Activated CD4-positive, alpha-beta T cell treated with anti-CD3 and anti-CD28 coated beads for 36 hours (primary cell): ENCODE measurements at regions of chr3 and their contacts with region 1.

Region 1: DNA sequence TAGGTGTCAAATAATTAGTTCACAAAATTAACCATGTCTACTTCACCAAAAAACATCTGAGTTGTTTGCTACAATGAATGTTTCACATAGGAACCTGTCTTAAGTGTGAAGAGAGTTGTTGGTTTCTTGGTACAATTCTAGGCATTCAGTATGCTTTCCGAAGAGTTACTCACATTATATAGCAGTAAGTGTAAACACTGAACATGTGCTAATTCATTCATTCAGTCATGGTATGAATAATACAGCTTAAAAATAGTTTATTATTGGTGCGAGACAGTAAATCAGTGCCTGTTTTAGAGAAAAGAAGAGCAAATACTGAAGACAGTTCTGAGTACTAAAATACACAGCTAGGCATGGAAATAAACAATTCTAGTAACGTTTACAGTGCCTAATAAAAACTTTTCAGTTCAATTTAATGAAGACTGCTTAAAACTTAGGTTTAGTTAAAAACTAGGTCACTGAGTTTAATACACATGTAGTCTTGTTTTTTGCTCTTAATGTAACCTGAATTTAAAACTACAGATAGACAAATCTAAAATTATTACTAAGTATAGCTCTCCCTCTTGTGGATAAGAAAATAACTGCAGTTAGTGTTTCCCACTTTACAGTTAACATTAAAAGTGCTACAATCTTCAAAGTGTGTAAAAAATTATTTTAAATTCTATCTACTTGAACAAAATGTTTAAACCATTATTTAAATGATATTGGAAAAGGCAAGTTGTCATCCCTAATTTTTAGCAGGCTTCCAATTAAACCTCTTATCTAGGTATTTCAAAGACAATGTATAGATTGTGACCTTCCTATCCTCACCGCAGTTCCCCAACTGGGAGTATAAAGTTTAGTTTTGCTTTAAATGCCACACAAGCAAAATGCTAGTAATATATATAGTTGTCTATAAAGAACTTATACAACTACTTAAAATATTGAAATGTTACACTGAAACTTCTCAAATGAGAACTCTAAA is 20.1 kb upstream of the ZCWPW2 start:
- DNase-seq: no peak
- ATAC-seq: no peak
- H3K4me3 Mint-ChIP-seq: no peak overlapping the region
- H3K27ac Mint-ChIP-seq: no peak overlapping the region
- H3K4me1 Mint-ChIP-seq: peaks cover 14% of the 10 kb centered on the region
- H3K27me3 Mint-ChIP-seq: no peaks in the 10 kb centered on the region

Region 2: DNA sequence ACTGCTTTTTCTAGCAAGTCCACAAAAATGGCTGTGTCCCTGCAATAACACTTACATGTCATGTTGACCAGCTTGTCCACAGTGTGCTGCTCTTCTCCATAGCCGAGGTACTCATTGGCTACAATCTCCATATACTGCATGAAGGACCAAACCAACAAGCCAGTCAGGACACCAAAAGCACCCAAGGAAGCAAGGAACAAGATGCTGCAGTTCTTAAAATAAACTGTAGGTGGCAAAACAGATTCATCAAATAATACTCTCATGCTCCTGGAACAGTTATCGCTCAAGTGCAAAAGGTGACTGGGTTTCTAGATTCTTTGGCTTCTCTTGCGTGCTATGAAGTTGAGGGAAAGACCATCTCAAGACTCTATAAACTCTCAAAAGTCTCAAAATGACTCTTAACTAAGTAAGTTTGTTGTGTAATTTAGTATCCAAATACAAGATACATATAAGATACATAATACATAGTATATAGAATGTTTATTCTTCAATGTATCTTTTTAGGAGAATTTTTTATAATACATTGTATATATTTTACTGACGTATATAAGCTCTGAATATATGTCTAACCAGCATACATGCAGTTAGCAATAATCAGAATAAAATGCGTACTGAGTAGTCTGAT is 1016.3 kb before region 1 on chr3:
- CTCF ChIA-PET with region 1: no interaction called
- POLR2A ChIA-PET with region 1: no interaction called
- intact Hi-C with region 1: loop called in 1 of 2 experiments (anchors 5 kb)
- DNase-seq: no peak
- ATAC-seq: peak; percentile 63
- H3K4me3 Mint-ChIP-seq: no peak overlapping the region
- H3K27ac Mint-ChIP-seq: no peak overlapping the region
- H3K4me1 Mint-ChIP-seq: no peaks in the 10 kb centered on the region
- H3K27me3 Mint-ChIP-seq: peaks cover 2% of the 10 kb centered on the region

Region 3: GRCh38 chr3:28050895-28051294 is 277.6 kb before region 1 on chr3:
- CTCF ChIA-PET with region 1: no interaction called
- POLR2A ChIA-PET with region 1: no interaction called
- intact Hi-C with region 1: loop called (anchors 2 kb)
- DNase-seq: peak; percentile 64
- ATAC-seq: peak; percentile 80
- H3K4me3 Mint-ChIP-seq: no peak overlapping the region
- H3K27ac Mint-ChIP-seq: peak overlapping the region; percentile 4
- H3K4me1 Mint-ChIP-seq: peaks cover 32% of the 10 kb centered on the region
- H3K27me3 Mint-ChIP-seq: peaks cover 6% of the 10 kb centered on the region

Region 4: GRCh38 chr3:28317438-28318022 is 10.9 kb before region 1 on chr3:
- CTCF ChIA-PET with region 1: interaction called, 25 read pairs
- POLR2A ChIA-PET with region 1: no interaction called
- intact Hi-C with region 1: loop called in 1 of 2 experiments (anchors 1 kb)
- DNase-seq: peak; percentile 36
- ATAC-seq: peak; percentile 93
- H3K4me3 Mint-ChIP-seq: no peak overlapping the region
- H3K27ac Mint-ChIP-seq: no peak overlapping the region
- H3K4me1 Mint-ChIP-seq: peaks cover 4% of the 10 kb centered on the region
- H3K27me3 Mint-ChIP-seq: no peaks in the 10 kb centered on the region

Region 5: DNA sequence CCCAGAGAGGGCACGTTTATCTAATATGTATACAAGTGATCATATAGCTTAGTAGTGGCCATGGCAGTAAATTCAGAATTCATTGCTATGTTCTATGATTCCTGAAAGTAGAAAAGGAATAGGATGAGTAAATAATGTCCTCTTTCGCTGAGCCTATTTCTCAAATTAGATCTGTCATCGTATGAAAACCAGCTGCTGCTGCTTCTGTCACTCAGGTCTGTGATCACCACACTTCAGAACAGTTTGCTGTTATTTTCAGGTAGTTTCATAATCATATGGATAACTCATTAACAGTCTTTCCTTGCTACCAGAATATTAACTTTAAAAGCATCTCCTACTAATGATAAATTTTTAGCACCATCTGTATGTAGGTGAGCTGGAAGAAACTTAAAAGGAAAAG is 309.3 kb after region 1 on chr3:
- CTCF ChIA-PET with region 1: no interaction called
- POLR2A ChIA-PET with region 1: no interaction called
- intact Hi-C with region 1: no loop called
- DNase-seq: no peak
- ATAC-seq: no peak
- H3K4me3 Mint-ChIP-seq: no peak overlapping the region
- H3K27ac Mint-ChIP-seq: no peak overlapping the region
- H3K4me1 Mint-ChIP-seq: no peaks in the 10 kb centered on the region
- H3K27me3 Mint-ChIP-seq: no peaks in the 10 kb centered on the region